Heart right ventricle (tissue), 16 donors: ENCODE measurements at regions of chr11 and their contacts with region 1.

Region 1: DNA sequence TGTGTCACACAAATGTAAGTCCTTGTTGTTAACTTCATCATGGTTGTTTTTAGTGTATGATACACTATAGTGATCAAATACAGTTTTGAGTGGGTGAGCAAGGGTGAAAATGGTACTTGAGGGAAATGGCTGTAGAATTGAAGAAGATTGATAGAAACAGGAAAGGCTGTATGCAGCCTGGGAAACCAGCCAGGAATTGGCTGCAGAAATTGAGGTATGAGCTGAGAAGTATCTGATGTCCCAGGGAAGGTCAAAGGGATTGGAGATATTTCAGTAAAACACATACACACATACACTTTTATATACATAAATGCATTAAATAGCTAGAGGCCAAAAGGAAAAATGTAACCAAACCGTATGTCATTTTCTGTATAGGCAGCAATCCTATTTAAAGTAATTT is 13.1 kb upstream of the YAP1 start:
- DNase-seq: no peak
- ATAC-seq: no peak
- H3K4me3 ChIP-seq: no peak overlapping the region
- H3K27ac ChIP-seq: no peak overlapping the region
- H3K4me1 ChIP-seq: no peaks in the 10 kb centered on the region
- H3K27me3 ChIP-seq: no peaks in the 10 kb centered on the region
- CTCF ChIP-seq: no peak

Region 2: DNA sequence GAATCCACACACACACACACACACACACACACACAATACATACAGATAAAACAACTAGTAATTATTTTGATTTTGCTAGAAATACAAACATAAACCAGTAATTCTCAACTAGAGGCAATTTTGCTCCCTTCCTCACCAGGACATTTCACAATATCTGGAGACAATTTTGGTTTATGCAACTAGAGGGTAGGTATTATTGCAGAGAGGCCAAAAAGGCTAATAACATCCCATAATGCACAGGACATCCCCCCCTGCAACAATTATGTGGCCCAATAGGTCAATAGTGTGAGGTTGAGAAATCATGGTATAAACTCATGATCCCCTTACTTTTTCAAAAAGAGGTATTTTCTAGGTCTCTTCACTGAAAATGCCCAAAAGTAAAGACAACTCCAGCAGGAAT is 996.6 kb before region 1 on chr11:
- intact Hi-C with region 1: no loop called
- DNase-seq: no peak
- ATAC-seq: no peak
- H3K4me3 ChIP-seq: no peak overlapping the region
- H3K27ac ChIP-seq: peak overlapping the region in 1 of 10 donors; percentile 8
- H3K4me1 ChIP-seq: peaks cover 0 to 32% (median 7%) of the 10 kb centered on the region in 9 donors
- H3K27me3 ChIP-seq: no peaks in the 10 kb centered on the region
- CTCF ChIP-seq: no peak

Region 3: DNA sequence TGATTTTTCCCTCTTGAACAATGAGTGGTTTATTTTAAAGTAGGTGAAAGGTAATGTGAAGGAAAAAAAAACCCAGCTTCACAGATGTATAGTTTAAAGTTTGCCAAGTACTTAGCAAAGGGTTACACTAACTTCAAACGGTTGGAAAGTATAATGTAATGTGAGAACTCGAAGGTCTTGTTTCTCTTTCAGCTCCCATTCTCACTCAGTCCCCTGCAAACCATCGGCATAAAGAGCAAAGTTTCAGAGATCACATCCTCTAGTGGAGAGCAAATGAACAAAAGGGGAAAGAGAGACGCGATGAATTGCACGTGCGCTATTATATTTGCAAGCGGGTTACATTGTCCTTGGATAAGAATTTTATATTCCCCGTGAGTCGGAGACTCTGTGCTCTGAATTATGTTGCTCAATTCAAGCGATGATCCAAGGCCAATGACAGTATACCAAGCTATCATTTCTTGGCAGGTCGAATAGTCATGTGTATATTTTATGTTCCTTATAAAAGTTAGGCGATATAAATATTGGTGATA is 182.5 kb after region 1 on chr11:
- intact Hi-C with region 1: loop called in 2 of 10 experiments (anchors 10 kb)
- DNase-seq: no peak
- ATAC-seq: peak in 2 of 8 donors; percentile 47 to 55
- H3K4me3 ChIP-seq: peak overlapping the region in 2 of 10 donors; percentile 6 to 13
- H3K27ac ChIP-seq: no peak overlapping the region
- H3K4me1 ChIP-seq: peaks cover 0 to 18% (median 6%) of the 10 kb centered on the region in 9 donors
- H3K27me3 ChIP-seq: peaks cover 0 to 18% (median 0%) of the 10 kb centered on the region in 7 donors
- CTCF ChIP-seq: peak in 2 of 9 donors; percentile 10 to 31